Dorsolateral prefrontal cortex (tissue), 120 donors: ENCODE measurements at regions of chr17 and their contacts with region 1.

Region 1: GRCh38 chr17:8079291-8080207 is 8.0 kb downstream of the ALOX12B start:
- DNase-seq: peak in 8 of 10 donors; percentile 61 to 83 (median 70)
- H3K4me3 ChIP-seq: peak overlapping the region; percentile 13 to 73 (median 58)
- H3K27ac ChIP-seq: peak overlapping the region in 11 of 59 donors; percentile 13 to 66 (median 28)
- H3K27me3 ChIP-seq: peaks cover 0 to 63% (median 33%) of the 10 kb centered on the region in 45 donors
- CTCF ChIP-seq: peak; percentile 62 to 93 (median 86)

Region 2: GRCh38 chr17:8109661-8110464 is 30.3 kb after region 1 on chr17:
- intact Hi-C with region 1: loop called (anchors 5 kb)
- DNase-seq: peak in 6 of 10 donors; percentile 25 to 60 (median 45)
- H3K4me3 ChIP-seq: peak overlapping the region; percentile 10 to 63 (median 44)
- H3K27ac ChIP-seq: peak overlapping the region in 2 of 59 donors; percentile 18 to 68
- H3K27me3 ChIP-seq: peaks cover 0 to 34% (median 8%) of the 10 kb centered on the region in 45 donors
- CTCF ChIP-seq: peak; percentile 36 to 80 (median 66)

Region 3: GRCh38 chr17:8300627-8301242 is 221.2 kb after region 1 on chr17:
- intact Hi-C with region 1: loop called in 1 of 2 experiments (anchors 5 kb)
- DNase-seq: peak; percentile 36 to 73 (median 60)
- H3K4me3 ChIP-seq: no peak overlapping the region
- H3K27ac ChIP-seq: peak overlapping the region in 7 of 59 donors; percentile 8 to 53 (median 29)
- H3K27me3 ChIP-seq: no peaks in the 10 kb centered on the region
- CTCF ChIP-seq: peak; percentile 64 to 94 (median 87)